ENCODE measurements at regions of chr3 and their contacts with region 1.

Region 1: DNA sequence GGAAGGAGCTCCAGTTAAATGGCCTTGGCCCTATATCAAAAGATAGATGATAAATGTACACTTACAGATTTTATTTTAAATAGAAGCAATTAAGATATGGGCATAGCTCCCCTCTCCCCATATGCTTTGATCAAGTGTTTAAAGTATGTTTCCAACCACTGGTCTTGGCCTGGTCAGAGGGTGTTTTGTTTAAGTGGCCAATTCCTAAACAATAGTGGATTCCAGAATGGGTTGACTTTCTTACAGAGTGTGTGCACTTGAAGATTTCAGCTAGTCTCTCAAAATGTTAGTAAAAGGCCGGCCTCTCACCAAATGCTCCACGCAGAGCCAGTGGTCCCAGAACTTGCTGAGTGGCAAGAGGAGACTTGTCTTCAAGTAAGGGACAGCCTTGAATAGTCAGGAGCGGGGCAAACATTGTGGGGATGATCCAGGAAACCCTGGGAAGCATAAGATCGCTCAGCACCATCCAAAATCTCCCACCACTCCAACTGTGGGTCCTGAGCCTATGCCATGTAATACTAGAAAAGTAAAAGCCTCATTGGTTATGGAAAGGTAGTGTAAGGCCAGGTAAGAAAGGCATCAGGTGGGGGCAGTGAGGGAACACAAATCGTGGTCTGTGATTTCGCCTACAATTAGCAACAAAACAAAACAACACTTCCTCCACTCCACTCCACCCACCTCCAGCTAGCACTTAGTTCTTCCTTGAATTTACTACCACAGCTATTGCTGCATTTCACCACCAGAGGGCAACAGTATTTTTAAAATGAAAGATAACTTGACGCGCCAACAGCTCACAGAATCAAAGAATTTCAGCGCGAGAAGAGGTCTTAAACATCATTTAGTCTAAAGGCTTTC is 4.8 kb downstream of the RARRES1 start:
- DNase-seq: no peak
- ATAC-seq: peak; percentile 41 to 58 (median 51)
- H3K4me3 ChIP-seq: no peak overlapping the region
- H3K27ac ChIP-seq: no peak overlapping the region
- H3K4me1 ChIP-seq: peaks cover 0 to 25% (median 13%) of the 10 kb centered on the region in 4 donors
- H3K27me3 ChIP-seq: no peaks in the 10 kb centered on the region
- CTCF ChIP-seq: peak; percentile 78 to 87 (median 80)
- POLR2A ChIP-seq: no peak

Region 2: GRCh38 chr3:158659454-158660237 is 67.8 kb before region 1 on chr3:
- intact Hi-C with region 1: loop called in 1 of 2 experiments (anchors 10 kb)
- DNase-seq: peak in 1 of 3 donors; percentile 56
- ATAC-seq: peak; percentile 87 to 97 (median 92)
- H3K4me3 ChIP-seq: no peak overlapping the region
- H3K27ac ChIP-seq: peak overlapping the region in 1 of 3 donors; percentile 8
- H3K4me1 ChIP-seq: no peaks in the 10 kb centered on the region
- H3K27me3 ChIP-seq: no peaks in the 10 kb centered on the region
- CTCF ChIP-seq: peak; percentile 56 to 72 (median 68)
- POLR2A ChIP-seq: no peak

Region 3: GRCh38 chr3:158789592-158789991 is 62.2 kb after region 1 on chr3:
- intact Hi-C with region 1: loop called in 1 of 2 experiments (anchors 10 kb)
- DNase-seq: no peak
- ATAC-seq: peak; percentile 38 to 82 (median 58)
- H3K4me3 ChIP-seq: no peak overlapping the region
- H3K27ac ChIP-seq: no peak overlapping the region
- H3K4me1 ChIP-seq: no peaks in the 10 kb centered on the region
- H3K27me3 ChIP-seq: no peaks in the 10 kb centered on the region
- CTCF ChIP-seq: peak; percentile 30 to 43 (median 34)
- POLR2A ChIP-seq: no peak

Region 4: DNA sequence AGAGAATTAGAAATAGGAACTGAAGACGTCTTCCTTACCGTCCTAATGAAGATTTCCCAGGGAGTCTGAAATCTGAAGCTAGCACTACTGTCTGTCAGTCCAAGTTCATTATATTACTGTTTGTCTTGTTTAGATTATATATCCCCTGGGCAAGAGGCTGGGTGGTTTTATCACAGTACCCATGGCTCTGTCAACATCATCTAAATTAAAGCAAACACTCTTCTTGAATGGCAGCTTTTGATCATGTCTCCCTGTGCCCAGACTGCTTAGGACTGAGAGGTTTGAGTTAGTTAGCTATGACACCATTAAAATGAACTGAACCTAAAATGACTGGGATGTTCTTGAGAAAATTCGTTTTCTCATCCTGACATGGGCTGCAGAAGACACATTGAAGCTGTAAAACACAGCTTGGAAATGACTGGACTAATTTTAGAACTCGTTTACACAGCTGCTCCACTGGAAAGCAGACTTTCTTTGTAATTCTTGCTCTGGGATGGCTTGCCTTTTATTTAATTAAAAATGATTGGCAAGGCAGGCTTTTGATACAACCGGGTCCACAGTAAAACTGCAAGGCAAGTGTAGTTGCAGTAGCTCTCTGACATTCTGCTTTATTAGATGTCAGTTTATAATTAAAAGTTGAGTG is 318.0 kb after region 1 on chr3:
- intact Hi-C with region 1: no loop called
- DNase-seq: no peak
- ATAC-seq: no peak
- H3K4me3 ChIP-seq: no peak overlapping the region
- H3K27ac ChIP-seq: no peak overlapping the region
- H3K4me1 ChIP-seq: no peaks in the 10 kb centered on the region
- H3K27me3 ChIP-seq: no peaks in the 10 kb centered on the region
- CTCF ChIP-seq: no peak
- POLR2A ChIP-seq: no peak